Heart right ventricle (tissue), 16 donors: ENCODE measurements at regions of chr5 and their contacts with region 1.

Region 1: GRCh38 chr5:79743846-79744605 is 54.4 kb downstream of the CMYA5 start:
- DNase-seq: peak; percentile 23 to 69
- ATAC-seq: peak; percentile 92 to 98 (median 95)
- H3K4me3 ChIP-seq: no peak overlapping the region
- H3K27ac ChIP-seq: peak overlapping the region; percentile 15 to 88 (median 76)
- H3K4me1 ChIP-seq: peaks cover 0 to 46% (median 12%) of the 10 kb centered on the region in 9 donors
- H3K27me3 ChIP-seq: no peaks in the 10 kb centered on the region
- CTCF ChIP-seq: no peak

Region 2: GRCh38 chr5:79689541-79690466 is 54.2 kb before region 1 on chr5 and contains the start of gene CMYA5:
- intact Hi-C with region 1: loop called in 4 of 10 experiments (anchors 5 kb)
- DNase-seq: peak; percentile 63 to 67
- ATAC-seq: peak; percentile 69 to 89 (median 76)
- H3K4me3 ChIP-seq: peak within 1 kb of the TSS; percentile 46 to 68 (median 60)
- H3K27ac ChIP-seq: peak within 1 kb of the TSS; percentile 83 to 99 (median 90)
- H3K4me1 ChIP-seq: peaks cover 0 to 15% (median 2%) of the 10 kb centered on the region in 9 donors
- H3K27me3 ChIP-seq: no peaks in the 10 kb centered on the region
- CTCF ChIP-seq: no peak
- total RNA-seq, gene CMYA5: 771 to 1,721 (median 1,115) TPM

Region 3: DNA sequence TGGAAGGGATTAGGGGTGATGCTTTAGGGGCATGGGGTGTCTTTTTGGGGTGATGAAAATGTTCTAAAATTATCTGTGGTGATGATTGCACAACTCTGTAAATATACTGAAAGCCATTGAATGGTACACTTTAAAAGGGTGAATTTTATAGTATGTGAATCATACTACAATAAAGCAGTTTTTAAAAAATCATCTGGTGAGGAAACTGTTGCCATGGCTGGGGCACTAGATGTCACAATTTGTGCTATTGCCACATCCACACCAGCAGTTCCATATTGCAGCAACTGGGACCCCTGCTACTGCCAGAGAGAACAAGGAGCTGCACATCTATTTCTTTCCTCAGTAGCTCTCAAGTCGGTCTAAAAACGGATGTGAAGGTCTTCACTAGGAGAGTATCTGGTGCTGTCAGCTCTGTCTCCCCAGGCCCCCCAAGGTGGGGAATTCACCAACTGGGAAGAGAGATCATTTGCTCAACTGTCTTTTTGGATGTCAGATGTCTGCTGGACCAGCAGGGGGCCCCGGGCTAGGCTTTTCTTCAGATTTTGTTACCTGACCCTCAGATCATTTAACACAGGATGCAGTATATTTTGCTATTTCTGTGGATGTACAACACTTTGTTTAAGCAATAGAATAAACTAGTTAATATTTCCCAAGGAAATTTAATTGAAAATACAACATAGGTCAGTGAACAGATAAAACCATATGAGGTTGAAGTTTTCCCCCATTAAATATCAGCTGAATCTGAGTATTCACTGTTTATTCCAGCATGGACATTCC is 41.2 kb before region 1 on chr5:
- intact Hi-C with region 1: loop called in 2 of 10 experiments (anchors 5 kb)
- DNase-seq: no peak
- ATAC-seq: no peak
- H3K4me3 ChIP-seq: no peak overlapping the region
- H3K27ac ChIP-seq: peak overlapping the region in 8 of 10 donors; percentile 10 to 99 (median 66)
- H3K4me1 ChIP-seq: peaks cover 0 to 71% (median 37%) of the 10 kb centered on the region in 9 donors
- H3K27me3 ChIP-seq: no peaks in the 10 kb centered on the region
- CTCF ChIP-seq: peak; percentile 20 to 66 (median 56)

Region 4: GRCh38 chr5:79771387-79771786 is 27.4 kb after region 1 on chr5:
- intact Hi-C with region 1: no loop called
- DNase-seq: no peak
- ATAC-seq: peak in 6 of 8 donors; percentile 20 to 61 (median 44)
- H3K4me3 ChIP-seq: no peak overlapping the region
- H3K27ac ChIP-seq: peak overlapping the region in 3 of 10 donors; percentile 2 to 9 (median 3)
- H3K4me1 ChIP-seq: peaks cover 0 to 24% (median 0%) of the 10 kb centered on the region in 9 donors
- H3K27me3 ChIP-seq: no peaks in the 10 kb centered on the region
- CTCF ChIP-seq: no peak